ENCODE measurements at regions of chr11 and their contacts with region 1.

Region 1: DNA sequence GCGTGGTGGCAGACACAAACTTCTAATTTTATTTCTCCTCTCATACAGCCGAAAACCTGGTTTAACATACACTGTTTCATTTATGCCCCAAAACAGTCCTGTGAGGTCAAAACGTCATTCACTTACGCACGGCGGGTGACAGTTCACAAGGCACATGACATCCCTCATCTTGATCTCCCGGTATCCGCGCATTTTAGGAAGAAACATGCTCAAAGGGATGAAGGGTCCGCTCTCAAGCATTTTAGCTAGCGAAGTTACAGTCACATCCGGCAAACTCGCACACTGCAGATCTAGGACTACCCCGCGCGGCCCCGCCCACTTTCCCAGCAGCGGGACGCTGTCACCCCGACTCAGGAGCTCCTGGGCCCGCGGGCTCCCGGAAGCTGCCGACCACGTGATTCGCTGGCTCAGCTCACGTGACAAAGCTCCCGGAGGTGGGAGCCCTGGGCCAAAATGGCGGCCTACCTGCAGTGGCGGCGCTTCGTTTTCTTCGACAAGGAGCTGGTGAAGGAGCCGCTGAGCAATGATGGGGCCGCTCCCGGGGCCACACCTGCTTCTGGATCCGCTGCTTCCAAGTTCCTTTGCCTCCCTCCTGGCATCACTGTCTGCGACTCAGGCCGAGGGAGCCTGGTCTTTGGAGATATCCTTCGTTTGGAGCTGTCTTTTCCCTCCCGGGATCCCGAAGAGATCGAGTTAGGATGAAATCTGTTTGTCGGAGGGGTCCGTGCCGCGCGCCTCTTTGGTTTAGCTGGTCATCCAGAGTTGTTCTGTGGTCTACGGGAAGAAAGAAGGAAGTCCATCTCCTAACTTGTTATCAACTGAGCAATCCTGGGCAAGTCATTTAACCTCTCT is at the start of gene VPS11:
- DNase-seq: peak; percentile 97
- ATAC-seq: peak; percentile 96
- H3K4me3 ChIP-seq: peak within 1 kb of the TSS; percentile 72 to 98 (median 96)
- H3K4me3 Mint-ChIP-seq: peak within 1 kb of the TSS; percentile 100
- H3K27ac ChIP-seq: peak within 1 kb of the TSS; percentile 88 to 92
- H3K27ac Mint-ChIP-seq: peak within 1 kb of the TSS; percentile 98
- H3K4me1 ChIP-seq: peaks cover 15 to 28% of the 10 kb centered on the region in 2 donors
- H3K4me1 Mint-ChIP-seq: peaks cover 38% of the 10 kb centered on the region
- H3K27me3 ChIP-seq: no peaks in the 10 kb centered on the region
- H3K27me3 Mint-ChIP-seq: no peaks in the 10 kb centered on the region
- CTCF ChIP-seq: no peak
- total RNA-seq, gene VPS11: 64.7 and 71.1 TPM in 2 replicates

Region 2: GRCh38 chr11:118214210-118214914 is 853.2 kb before region 1 on chr11:
- CTCF ChIA-PET with region 1: no interaction called
- POLR2A ChIA-PET with region 1: no interaction called
- intact Hi-C with region 1: no loop called
- DNase-seq: peak; percentile 67
- ATAC-seq: peak; percentile 78
- H3K4me3 ChIP-seq: peak overlapping the region in 3 of 5 experiments; percentile 22 to 34 (median 28)
- H3K4me3 Mint-ChIP-seq: peak overlapping the region; percentile 84
- H3K27ac ChIP-seq: no peak overlapping the region
- H3K27ac Mint-ChIP-seq: peak overlapping the region; percentile 85
- H3K4me1 ChIP-seq: peaks cover 50 to 52% of the 10 kb centered on the region in 2 donors
- H3K4me1 Mint-ChIP-seq: peaks cover 53% of the 10 kb centered on the region
- H3K27me3 ChIP-seq: peaks cover 0 to 16% (median 8%) of the 10 kb centered on the region in 4 experiments
- H3K27me3 Mint-ChIP-seq: peaks cover 42% of the 10 kb centered on the region
- CTCF ChIP-seq: no peak

Region 3: DNA sequence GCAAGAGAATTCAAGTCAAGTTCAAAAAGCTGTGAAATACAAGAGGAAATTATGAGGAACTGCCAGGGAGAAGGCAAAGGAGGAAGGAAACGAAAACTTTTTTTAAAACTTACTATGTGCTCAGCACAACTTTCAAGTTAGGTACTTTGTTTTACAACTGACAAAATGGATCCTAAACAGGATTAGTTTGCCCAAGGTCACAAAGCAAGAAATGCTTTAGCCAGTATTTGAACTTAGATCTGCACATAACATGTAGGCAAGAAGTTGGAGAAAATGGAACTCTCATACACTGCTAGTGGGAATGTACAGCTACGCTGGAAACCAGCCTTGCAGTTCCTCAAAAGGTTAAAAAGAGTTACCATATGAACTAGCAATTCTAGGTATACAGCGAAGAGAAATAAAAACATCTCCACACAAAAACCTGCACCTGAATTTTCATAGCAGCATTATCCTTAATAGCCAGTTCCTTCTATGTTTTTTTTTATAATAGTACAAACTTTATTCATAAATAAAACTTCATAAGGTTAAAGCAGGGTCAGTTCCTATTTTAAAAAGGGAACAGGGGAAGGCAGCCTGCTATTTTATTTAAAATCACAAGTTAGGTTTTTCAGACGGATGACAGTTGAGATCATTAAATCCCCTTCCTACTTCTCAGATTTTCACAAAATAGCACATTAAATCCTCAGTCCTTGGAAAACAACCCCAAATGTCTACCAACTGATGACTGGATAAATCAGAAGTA is 295.9 kb before region 1 on chr11:
- CTCF ChIA-PET with region 1: no interaction called
- POLR2A ChIA-PET with region 1: no interaction called
- intact Hi-C with region 1: no loop called
- DNase-seq: peak; percentile 27
- ATAC-seq: no peak
- H3K4me3 ChIP-seq: peak overlapping the region in 3 of 5 experiments; percentile 1 to 23 (median 5)
- H3K4me3 Mint-ChIP-seq: peak overlapping the region; percentile 81
- H3K27ac ChIP-seq: peak overlapping the region in 1 of 2 donors; percentile 77
- H3K27ac Mint-ChIP-seq: peak overlapping the region; percentile 80
- H3K4me1 ChIP-seq: peaks cover 44 to 56% of the 10 kb centered on the region in 2 donors
- H3K4me1 Mint-ChIP-seq: peaks cover 69% of the 10 kb centered on the region
- H3K27me3 ChIP-seq: no peaks in the 10 kb centered on the region
- H3K27me3 Mint-ChIP-seq: no peaks in the 10 kb centered on the region
- CTCF ChIP-seq: no peak

Region 4: DNA sequence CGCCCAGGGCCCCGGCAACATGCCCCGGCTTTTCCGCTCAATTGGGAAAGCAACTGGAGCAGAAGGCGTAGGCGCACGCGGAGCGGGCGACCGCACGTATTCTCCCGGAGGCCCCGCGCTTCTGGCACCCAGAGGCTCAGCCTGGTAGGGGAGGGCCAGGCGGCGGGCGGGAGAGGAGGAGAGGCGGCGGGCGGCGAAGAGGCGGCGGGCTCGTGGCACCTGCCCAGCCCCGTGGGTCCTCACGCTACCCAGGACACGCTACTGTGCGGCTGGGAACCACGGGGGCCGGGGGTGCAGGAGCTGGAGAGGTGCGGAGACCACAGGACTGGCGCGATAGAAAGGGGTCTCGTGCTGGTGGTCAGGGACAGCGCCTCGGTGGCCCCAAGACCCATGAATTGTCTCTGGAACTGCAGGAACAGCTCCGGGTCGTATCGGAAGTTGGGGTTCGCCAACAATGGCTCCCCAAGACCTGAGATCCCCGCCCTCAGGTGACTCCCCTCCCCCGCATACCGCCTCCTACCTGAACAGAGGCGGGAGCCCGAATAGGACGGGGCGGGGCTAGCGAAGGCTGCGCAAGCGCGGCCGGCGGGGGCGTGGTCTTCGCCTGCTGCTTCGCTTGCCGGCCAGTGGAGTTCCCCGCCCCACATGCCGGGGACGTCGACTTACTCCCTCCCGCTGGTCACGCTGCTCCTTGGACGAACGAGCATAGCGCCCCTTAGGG is 37.1 kb before region 1 on chr11 and contains the start of gene SLC37A4:
- CTCF ChIA-PET with region 1: interaction called, 4 read pairs
- POLR2A ChIA-PET with region 1: no interaction called
- intact Hi-C with region 1: loop called (anchors 1 kb)
- DNase-seq: peak; percentile 99
- ATAC-seq: peak; percentile 96
- H3K4me3 ChIP-seq: peak within 1 kb of the TSS in 4 of 5 experiments; percentile 80 to 89 (median 86)
- H3K4me3 Mint-ChIP-seq: peak within 1 kb of the TSS; percentile 92
- H3K27ac ChIP-seq: peak within 1 kb of the TSS; percentile 46 to 74
- H3K27ac Mint-ChIP-seq: peak within 1 kb of the TSS; percentile 82
- H3K4me1 ChIP-seq: peaks cover 4 to 10% of the 10 kb centered on the region in 2 donors
- H3K4me1 Mint-ChIP-seq: peaks cover 20% of the 10 kb centered on the region
- H3K27me3 ChIP-seq: no peaks in the 10 kb centered on the region
- H3K27me3 Mint-ChIP-seq: no peaks in the 10 kb centered on the region
- CTCF ChIP-seq: no peak
- total RNA-seq, gene SLC37A4: 13.2 and 14.3 TPM in 2 replicates

Region 5: DNA sequence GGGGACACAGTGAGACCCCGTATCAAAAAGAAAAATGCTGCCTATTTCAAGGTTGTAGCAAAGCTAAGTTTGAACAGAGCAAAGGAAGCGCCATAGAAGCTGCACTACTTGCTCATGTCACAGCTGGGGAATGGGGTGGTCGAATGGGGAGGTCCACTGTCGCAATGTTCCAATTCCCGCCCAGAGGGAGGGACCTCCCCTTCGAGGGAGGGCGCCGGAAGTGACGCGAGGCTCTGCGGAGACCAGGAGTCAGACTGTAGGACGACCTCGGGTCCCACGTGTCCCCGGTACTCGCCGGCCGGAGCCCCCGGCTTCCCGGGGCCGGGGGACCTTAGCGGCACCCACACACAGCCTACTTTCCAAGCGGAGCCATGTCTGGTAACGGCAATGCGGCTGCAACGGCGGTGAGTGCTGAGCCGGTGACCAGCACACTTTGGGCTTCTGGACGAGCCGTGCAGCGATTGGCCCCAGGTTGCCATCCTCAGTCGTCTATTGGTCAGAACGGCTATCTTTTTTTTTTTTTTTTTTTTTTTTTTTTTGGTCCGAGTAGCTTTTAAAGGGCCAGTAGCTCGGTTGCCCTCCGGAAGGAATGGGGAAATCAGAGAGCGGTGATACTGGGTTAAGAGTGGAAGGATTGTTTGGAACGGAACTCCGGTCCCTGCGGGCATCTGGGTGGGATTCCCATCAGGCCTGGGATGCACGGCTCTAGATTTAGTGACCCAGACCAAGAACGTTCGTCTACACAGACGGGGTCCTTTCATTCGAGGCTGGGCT is 17.3 kb after region 1 on chr11 and contains the start of gene HMBS:
- CTCF ChIA-PET with region 1: interaction called, 5 read pairs
- POLR2A ChIA-PET with region 1: interaction called, 16 read pairs
- intact Hi-C with region 1: loop called (anchors 1 kb)
- DNase-seq: peak; percentile 97
- ATAC-seq: peak; percentile 91
- H3K4me3 ChIP-seq: peak within 1 kb of the TSS; percentile 74 to 90 (median 81)
- H3K4me3 Mint-ChIP-seq: peak within 1 kb of the TSS; percentile 98
- H3K27ac ChIP-seq: peak within 1 kb of the TSS; percentile 45 to 79
- H3K27ac Mint-ChIP-seq: peak within 1 kb of the TSS; percentile 95
- H3K4me1 ChIP-seq: peaks cover 12 to 21% of the 10 kb centered on the region in 2 donors
- H3K4me1 Mint-ChIP-seq: peaks cover 20% of the 10 kb centered on the region
- H3K27me3 ChIP-seq: no peaks in the 10 kb centered on the region
- H3K27me3 Mint-ChIP-seq: no peaks in the 10 kb centered on the region
- CTCF ChIP-seq: no peak
- total RNA-seq, gene HMBS: 7.6 and 9.2 TPM in 2 replicates

Measured in B cell (primary cell).